MCF 10A (cell line): ENCODE measurements at regions of chr1 and their contacts with region 1.

Region 1: DNA sequence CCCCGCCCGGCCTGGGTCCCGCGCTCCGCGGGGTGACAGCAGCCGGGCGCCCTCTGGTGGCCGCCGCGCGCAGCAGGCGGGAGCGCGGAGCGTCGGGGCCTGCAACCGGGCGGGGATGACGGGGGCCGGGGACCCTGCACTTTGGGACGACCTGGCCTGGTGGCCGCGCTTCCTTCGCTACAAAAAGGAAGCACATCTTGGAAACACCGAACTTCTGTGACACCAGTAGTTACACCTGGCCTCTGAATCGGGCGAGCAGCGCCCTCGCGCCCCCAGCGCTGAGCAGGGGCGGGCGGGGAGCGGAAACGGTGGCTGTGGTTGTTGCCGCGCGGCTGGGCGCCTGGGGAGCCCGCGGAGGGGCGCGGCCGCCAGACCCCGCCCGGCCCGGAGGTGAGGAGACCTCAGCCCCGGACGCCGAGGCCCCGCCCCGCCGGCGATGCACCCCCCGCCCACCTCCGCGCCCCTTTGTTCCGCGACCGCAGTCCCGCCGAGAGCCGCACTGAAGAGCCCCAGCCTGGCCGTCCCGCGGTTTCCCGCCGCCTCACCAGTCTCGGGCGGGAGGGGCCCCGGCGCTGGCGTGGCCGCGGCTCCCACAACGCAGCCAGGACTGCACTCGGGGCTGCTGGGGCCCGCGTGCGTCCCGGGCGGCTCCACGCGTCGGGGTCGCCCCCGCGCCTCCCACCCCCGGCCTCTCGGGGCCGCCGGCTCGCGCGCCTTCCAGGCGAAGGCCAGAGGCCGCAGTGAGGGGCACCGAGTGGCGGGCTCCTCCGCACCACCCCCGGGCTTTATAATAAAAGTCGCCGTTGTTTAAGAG is 59.3 kb downstream of the H3-3A start:
- DNase-seq: peak; percentile 72
- H3K4me3 Mint-ChIP-seq: peak overlapping the region; percentile 65
- H3K27ac Mint-ChIP-seq: no peak overlapping the region
- H3K4me1 Mint-ChIP-seq: peaks cover 29% of the 10 kb centered on the region
- H3K27me3 Mint-ChIP-seq: no peaks in the 10 kb centered on the region
- CTCF ChIP-seq: peak; percentile 99

Region 2: GRCh38 chr1:225207791-225208190 is 914.0 kb before region 1 on chr1:
- CTCF ChIA-PET with region 1: no interaction called
- POLR2A ChIA-PET with region 1: no interaction called
- intact Hi-C with region 1: no loop called
- DNase-seq: no peak
- H3K4me3 Mint-ChIP-seq: no peak overlapping the region
- H3K27ac Mint-ChIP-seq: no peak overlapping the region
- H3K4me1 Mint-ChIP-seq: no peaks in the 10 kb centered on the region
- H3K27me3 Mint-ChIP-seq: no peaks in the 10 kb centered on the region
- CTCF ChIP-seq: no peak

Region 3: GRCh38 chr1:225987491-225988316 is 134.1 kb before region 1 on chr1:
- CTCF ChIA-PET with region 1: interaction called, 10 read pairs
- POLR2A ChIA-PET with region 1: no interaction called
- intact Hi-C with region 1: no loop called
- DNase-seq: peak; percentile 77
- H3K4me3 Mint-ChIP-seq: no peak overlapping the region
- H3K27ac Mint-ChIP-seq: no peak overlapping the region
- H3K4me1 Mint-ChIP-seq: peaks cover 6% of the 10 kb centered on the region
- H3K27me3 Mint-ChIP-seq: no peaks in the 10 kb centered on the region
- CTCF ChIP-seq: peak; percentile 89

Region 4: DNA sequence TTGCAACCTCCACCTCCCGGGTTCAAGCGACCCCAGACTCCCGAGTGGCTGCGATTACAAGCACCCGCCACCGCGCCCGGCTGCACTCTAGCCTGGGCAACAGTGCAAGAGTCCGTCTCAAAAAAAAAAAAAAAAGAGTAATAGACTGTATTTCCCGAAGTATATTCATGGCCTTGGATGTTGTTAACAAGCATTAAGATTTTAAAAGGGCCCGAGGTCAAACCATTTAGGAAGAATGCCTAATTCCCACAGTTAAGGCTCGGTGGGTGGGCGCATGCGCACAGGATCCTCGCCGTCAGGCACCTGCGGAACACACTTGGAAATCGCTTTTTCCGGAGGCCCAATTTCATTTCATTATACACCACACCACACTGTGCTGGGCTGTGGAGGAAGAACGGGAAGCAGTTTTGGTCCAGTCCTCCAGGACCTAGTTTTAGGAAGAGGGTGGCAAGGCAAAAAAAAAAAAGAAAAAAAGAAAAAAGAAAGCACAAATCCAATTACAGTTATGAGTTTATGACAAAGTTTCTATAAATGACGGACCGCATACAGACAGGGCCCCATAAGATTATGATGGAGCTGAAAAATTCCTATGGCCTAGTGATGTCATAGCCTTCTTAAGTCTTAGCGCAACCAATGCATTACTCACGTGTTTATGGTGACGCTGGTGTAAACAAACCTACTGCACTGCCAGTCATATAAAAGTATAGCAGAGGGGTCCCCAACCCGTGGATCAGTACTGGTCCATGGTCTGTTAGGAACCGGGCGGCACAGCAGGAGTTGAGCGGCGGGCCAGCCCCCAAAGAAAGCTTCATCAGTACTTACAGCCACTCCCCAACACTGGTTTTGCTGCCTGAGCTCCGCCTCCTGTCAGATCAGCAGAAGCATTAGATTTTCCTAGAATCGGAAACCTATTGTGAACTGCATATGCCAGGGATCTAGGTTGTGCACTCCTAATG is 21.1 kb before region 1 on chr1:
- CTCF ChIA-PET with region 1: interaction called, 23 read pairs
- POLR2A ChIA-PET with region 1: interaction called, 7 read pairs
- intact Hi-C with region 1: no loop called
- DNase-seq: no peak
- H3K4me3 Mint-ChIP-seq: peak overlapping the region; percentile 47
- H3K27ac Mint-ChIP-seq: no peak overlapping the region
- H3K4me1 Mint-ChIP-seq: peaks cover 28% of the 10 kb centered on the region
- H3K27me3 Mint-ChIP-seq: no peaks in the 10 kb centered on the region
- CTCF ChIP-seq: no peak

Region 5: GRCh38 chr1:226162898-226163297 is 41.1 kb after region 1 on chr1:
- CTCF ChIA-PET with region 1: interaction called, 39 read pairs
- POLR2A ChIA-PET with region 1: no interaction called
- intact Hi-C with region 1: no loop called
- DNase-seq: no peak
- H3K4me3 Mint-ChIP-seq: no peak overlapping the region
- H3K27ac Mint-ChIP-seq: no peak overlapping the region
- H3K4me1 Mint-ChIP-seq: no peaks in the 10 kb centered on the region
- H3K27me3 Mint-ChIP-seq: no peaks in the 10 kb centered on the region
- CTCF ChIP-seq: no peak

Region 6: GRCh38 chr1:226302731-226303130 is 180.9 kb after region 1 on chr1:
- CTCF ChIA-PET with region 1: interaction called, 16 read pairs
- POLR2A ChIA-PET with region 1: no interaction called
- intact Hi-C with region 1: no loop called
- DNase-seq: no peak
- H3K4me3 Mint-ChIP-seq: no peak overlapping the region
- H3K27ac Mint-ChIP-seq: no peak overlapping the region
- H3K4me1 Mint-ChIP-seq: peaks cover 12% of the 10 kb centered on the region
- H3K27me3 Mint-ChIP-seq: no peaks in the 10 kb centered on the region
- CTCF ChIP-seq: no peak

Region 7: DNA sequence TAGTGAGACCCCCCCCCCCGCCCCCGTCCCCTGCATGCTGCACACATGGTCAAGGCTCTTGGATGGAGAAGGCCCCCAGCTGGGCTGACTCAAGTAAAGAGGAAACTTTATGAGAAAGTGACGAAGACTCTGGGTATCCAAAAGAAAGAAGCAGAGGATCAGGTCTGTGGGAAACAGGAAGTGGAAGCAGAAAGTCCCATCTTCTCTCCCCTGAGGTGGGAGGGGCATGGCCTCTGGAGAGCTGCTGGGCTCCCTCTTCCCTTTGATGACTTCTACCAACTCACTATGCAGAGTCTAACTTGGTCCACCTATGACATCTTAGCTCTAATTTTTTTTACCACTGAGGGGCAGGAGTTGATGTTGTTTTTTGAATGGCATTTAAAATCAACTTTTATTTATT is 229.9 kb after region 1 on chr1:
- CTCF ChIA-PET with region 1: interaction called, 10 read pairs
- POLR2A ChIA-PET with region 1: interaction called, 5 read pairs
- intact Hi-C with region 1: no loop called
- DNase-seq: no peak
- H3K4me3 Mint-ChIP-seq: no peak overlapping the region
- H3K27ac Mint-ChIP-seq: no peak overlapping the region
- H3K4me1 Mint-ChIP-seq: no peaks in the 10 kb centered on the region
- H3K27me3 Mint-ChIP-seq: no peaks in the 10 kb centered on the region
- CTCF ChIP-seq: no peak